ENCODE measurements at regions of chr13 and their contacts with region 1.

Region 1: GRCh38 chr13:97109841-97110492 is 112.2 kb upstream of the MBNL2 start:
- DNase-seq: peak; percentile 85 to 97 (median 90)
- ATAC-seq: peak; percentile 99
- H3K4me3 ChIP-seq: no peak overlapping the region
- H3K27ac ChIP-seq: peak overlapping the region in 1 of 2 donors; percentile 27
- H3K4me1 ChIP-seq: peaks cover 0 to 32% of the 10 kb centered on the region in 2 donors
- H3K27me3 ChIP-seq: no peaks in the 10 kb centered on the region
- CTCF ChIP-seq: peak; percentile 95 to 96

Region 2: DNA sequence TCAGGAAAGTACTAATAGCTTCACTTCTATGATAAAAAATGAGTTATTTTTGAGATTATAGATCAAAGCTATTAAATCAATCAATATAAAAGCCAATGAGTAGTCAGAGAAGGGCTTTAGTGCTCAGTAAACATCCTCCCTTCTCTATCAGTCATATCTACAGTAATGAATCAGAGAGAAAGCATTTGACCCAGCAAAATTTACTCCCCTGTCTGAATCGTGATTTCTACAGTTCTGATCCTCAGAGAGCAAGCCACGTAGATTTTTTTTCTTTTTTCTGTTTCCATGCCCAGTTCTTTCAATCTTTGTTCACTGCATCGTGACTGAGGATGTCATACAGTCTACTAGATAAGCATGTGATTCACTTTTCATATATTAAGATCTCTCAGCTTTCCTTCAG is 96.0 kb after region 1 on chr13:
- intact Hi-C with region 1: loop called in 1 of 2 experiments (anchors 5 kb)
- DNase-seq: no peak
- ATAC-seq: peak; percentile 41
- H3K4me3 ChIP-seq: no peak overlapping the region
- H3K27ac ChIP-seq: no peak overlapping the region
- H3K4me1 ChIP-seq: peaks cover 0 to 5% of the 10 kb centered on the region in 2 donors
- H3K27me3 ChIP-seq: no peaks in the 10 kb centered on the region
- CTCF ChIP-seq: no peak

Region 3: DNA sequence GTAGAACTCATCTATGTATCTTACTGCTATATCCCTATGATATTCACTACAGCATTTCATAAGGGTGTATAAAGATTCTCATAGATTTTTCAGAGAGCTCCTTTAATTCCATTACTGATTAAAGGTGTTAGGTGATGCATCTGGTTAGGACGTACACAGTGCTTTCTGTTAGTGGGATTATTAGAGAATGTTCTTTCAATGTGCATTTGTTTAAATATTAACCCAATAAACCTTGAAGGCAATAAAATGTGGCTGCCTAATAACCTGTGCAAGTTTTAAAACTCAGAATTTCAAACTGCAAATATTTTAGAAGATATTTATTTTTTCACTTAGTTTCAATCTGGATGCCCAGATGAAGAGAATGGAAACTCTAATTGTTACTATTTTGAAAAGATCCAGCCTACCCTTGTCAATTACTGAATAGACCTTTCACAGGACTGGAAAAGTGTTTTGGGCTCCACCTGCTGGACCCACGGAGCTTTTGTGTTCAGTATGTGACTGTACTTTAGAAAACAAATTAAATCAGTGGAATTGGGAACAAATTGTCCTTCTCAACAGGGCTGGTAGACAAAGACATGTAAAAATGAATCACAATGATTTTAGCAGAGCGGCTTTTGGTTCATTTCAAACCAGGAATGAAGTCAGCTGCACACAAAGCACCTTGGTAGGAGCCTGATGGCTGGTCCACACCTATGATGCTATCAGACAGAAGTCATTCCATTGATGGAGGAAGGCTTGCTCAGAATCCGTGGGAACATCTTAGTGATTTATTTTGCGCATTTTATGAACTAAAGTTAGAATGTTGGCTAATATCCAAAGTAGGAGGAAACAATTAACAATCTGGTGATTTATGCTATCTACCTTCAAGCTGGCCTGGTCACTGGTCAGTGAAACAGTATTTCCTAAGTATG is 234.6 kb after region 1 on chr13:
- intact Hi-C with region 1: loop called in 1 of 2 experiments (anchors 5 kb)
- DNase-seq: peak in 2 of 4 donors; percentile 38 to 57
- ATAC-seq: peak; percentile 83
- H3K4me3 ChIP-seq: no peak overlapping the region
- H3K27ac ChIP-seq: no peak overlapping the region
- H3K4me1 ChIP-seq: peaks cover 0 to 10% of the 10 kb centered on the region in 2 donors
- H3K27me3 ChIP-seq: no peaks in the 10 kb centered on the region
- CTCF ChIP-seq: peak; percentile 49 to 50

Region 4: DNA sequence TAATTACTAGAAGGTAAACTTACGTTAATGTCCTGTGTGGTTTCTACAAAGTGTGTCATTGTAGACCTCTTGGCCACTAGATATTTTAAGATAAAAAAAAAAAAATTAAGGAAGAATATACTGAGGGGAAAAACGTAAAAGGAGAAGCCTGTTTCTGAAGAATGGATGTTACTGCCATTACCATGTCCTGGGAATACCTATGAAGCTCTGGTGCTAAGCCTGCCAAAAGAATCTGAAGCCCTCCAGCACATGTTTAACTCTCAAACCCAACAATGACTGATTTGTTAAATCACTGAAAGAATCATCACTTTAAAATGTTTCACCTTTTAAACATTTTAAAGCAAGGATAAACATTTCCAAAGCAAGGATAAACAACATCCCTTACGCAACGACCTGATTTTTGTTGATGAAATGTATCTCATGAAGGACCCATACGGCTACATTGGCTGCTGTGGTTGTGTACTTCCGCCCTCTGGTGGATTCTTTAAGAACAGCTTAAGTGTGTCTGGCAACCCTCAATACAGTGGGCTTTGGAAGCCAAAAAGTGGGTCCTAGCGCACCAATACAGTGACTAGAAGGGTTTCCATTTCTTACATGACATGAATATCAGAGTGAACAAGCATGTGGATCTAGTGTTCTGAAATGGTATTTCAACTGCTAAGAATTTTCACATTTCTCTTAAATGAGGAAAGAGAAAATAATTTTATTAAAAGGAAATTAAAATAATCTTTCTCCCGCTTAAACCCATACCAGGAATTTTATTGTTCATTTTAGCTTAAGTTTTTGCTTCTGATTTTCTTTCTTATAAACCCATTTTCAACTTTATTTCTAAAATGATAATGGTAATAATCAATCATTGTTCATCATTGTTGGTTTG is 249.5 kb after region 1 on chr13:
- intact Hi-C with region 1: loop called in 1 of 2 experiments (anchors 5 kb)
- DNase-seq: peak in 2 of 4 donors; percentile 77 to 86
- ATAC-seq: peak; percentile 93
- H3K4me3 ChIP-seq: no peak overlapping the region
- H3K27ac ChIP-seq: peak overlapping the region in 1 of 2 donors; percentile 20
- H3K4me1 ChIP-seq: peaks cover 0 to 8% of the 10 kb centered on the region in 2 donors
- H3K27me3 ChIP-seq: no peaks in the 10 kb centered on the region
- CTCF ChIP-seq: peak; percentile 62 to 74

Measured in left lung (tissue), 14 donors.